ENCODE measurements at regions of chr4 and their contacts with region 1.

Region 1: GRCh38 chr4:78656968-78657445 is 105.4 kb downstream of the ANXA3 start:
- DNase-seq: peak in 3 of 5 donors; percentile 13 to 20 (median 14)
- H3K4me3 ChIP-seq: peak overlapping the region in 1 of 2 donors; percentile 13
- H3K4me3 Mint-ChIP-seq: peak overlapping the region; percentile 63 to 83 (median 78)
- H3K27ac ChIP-seq: no peak overlapping the region
- H3K27ac Mint-ChIP-seq: peak overlapping the region; percentile 1 to 86 (median 21)
- H3K4me1 ChIP-seq: peaks cover 26% of the 10 kb centered on the region
- H3K4me1 Mint-ChIP-seq: peaks cover 20 to 24% (median 24%) of the 10 kb centered on the region in 4 donors
- H3K27me3 ChIP-seq: no peaks in the 10 kb centered on the region
- H3K27me3 Mint-ChIP-seq: no peaks in the 10 kb centered on the region

Region 2: GRCh38 chr4:78644744-78645330 is 12.2 kb before region 1 on chr4:
- CTCF ChIA-PET with region 1: interaction called, 11 read pairs
- POLR2A ChIA-PET with region 1: no interaction called
- intact Hi-C with region 1: no loop called
- DNase-seq: peak in 4 of 5 donors; percentile 24 to 45 (median 31)
- H3K4me3 ChIP-seq: no peak overlapping the region
- H3K4me3 Mint-ChIP-seq: no peak overlapping the region
- H3K27ac ChIP-seq: no peak overlapping the region
- H3K27ac Mint-ChIP-seq: no peak overlapping the region
- H3K4me1 ChIP-seq: no peaks in the 10 kb centered on the region
- H3K4me1 Mint-ChIP-seq: peaks cover 0 to 5% (median 2%) of the 10 kb centered on the region in 4 donors
- H3K27me3 ChIP-seq: no peaks in the 10 kb centered on the region
- H3K27me3 Mint-ChIP-seq: no peaks in the 10 kb centered on the region

Measured in CD4-positive, alpha-beta memory T cell (primary cell).